ENCODE measurements at regions of chr3 and their contacts with region 1.

Region 1: DNA sequence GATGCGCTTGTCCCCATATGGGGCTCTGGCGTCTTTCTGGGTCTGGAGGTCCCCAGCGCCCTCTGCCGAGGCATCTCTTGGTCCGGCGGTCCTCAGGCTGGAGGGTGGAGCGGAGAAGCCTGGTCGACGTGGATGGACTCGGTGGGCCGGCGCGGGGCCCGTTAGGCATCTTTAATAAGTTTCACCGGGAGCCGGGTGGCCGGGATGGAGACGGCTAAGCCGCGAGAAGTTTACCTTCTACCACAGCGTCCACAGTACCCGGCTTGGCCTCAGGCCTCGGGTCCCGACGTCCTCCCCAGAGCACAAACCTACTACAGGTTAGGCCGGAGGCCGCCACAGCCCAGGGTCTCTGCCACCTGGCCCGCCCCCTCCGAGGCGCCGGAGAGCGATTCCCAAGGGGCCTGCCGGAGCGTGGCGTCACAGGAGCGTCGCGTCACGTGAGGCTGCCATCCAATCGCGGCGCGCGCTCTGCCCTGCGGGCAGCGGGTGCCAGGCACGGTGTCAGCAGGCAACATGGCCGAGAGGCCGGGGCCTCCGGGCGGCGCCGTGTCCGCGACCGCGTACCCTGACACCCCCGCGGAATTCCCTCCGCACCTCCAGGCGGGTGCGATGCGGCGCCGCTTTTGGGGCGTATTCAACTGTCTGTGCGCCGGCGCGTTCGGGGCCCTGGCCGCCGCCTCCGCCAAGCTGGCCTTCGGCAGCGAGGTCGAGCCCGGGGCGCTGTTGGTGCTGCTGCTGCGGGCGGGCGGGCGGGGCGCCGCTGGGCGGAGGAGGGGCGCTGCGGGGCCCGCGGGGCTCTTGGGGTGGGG is at the start of gene TMEM42:
- DNase-seq: peak; percentile 95
- ATAC-seq: peak; percentile 93
- H3K4me3 ChIP-seq: peak within 1 kb of the TSS; percentile 60 to 93 (median 70)
- H3K4me3 Mint-ChIP-seq: peak within 1 kb of the TSS; percentile 91
- H3K27ac ChIP-seq: peak within 1 kb of the TSS; percentile 85 to 88
- H3K27ac Mint-ChIP-seq: peak within 1 kb of the TSS; percentile 91
- H3K4me1 ChIP-seq: peaks cover 7 to 13% of the 10 kb centered on the region in 2 donors
- H3K4me1 Mint-ChIP-seq: peaks cover 23% of the 10 kb centered on the region
- H3K27me3 ChIP-seq: no peaks in the 10 kb centered on the region
- H3K27me3 Mint-ChIP-seq: no peaks in the 10 kb centered on the region
- CTCF ChIP-seq: no peak
- total RNA-seq, gene TMEM42: 22.6 and 22.7 TPM in 2 replicates

Region 2: GRCh38 chr3:43690400-43691119 is 1171.1 kb before region 1 on chr3 and contains the start of gene ABHD5:
- CTCF ChIA-PET with region 1: no interaction called
- POLR2A ChIA-PET with region 1: no interaction called
- intact Hi-C with region 1: loop called (anchors 2 kb)
- DNase-seq: peak; percentile 98
- ATAC-seq: peak; percentile 82
- H3K4me3 ChIP-seq: peak within 1 kb of the TSS; percentile 58 to 86 (median 83)
- H3K4me3 Mint-ChIP-seq: peak within 1 kb of the TSS; percentile 98
- H3K27ac ChIP-seq: peak within 1 kb of the TSS; percentile 58 to 87
- H3K27ac Mint-ChIP-seq: peak within 1 kb of the TSS; percentile 98
- H3K4me1 ChIP-seq: peaks cover 5 to 21% of the 10 kb centered on the region in 2 donors
- H3K4me1 Mint-ChIP-seq: peaks cover 27% of the 10 kb centered on the region
- H3K27me3 ChIP-seq: no peaks in the 10 kb centered on the region
- H3K27me3 Mint-ChIP-seq: no peaks in the 10 kb centered on the region
- CTCF ChIP-seq: peak; percentile 39
- total RNA-seq, gene ABHD5: 11.0 and 12.1 TPM in 2 replicates

Region 3: GRCh38 chr3:44338010-44338827 is 523.4 kb before region 1 on chr3 and contains the start of gene TCAIM:
- CTCF ChIA-PET with region 1: no interaction called
- POLR2A ChIA-PET with region 1: no interaction called
- intact Hi-C with region 1: loop called (anchors 5 kb)
- DNase-seq: peak; percentile 100
- ATAC-seq: peak; percentile 90
- H3K4me3 ChIP-seq: peak within 1 kb of the TSS; percentile 85 to 97 (median 87)
- H3K4me3 Mint-ChIP-seq: peak within 1 kb of the TSS; percentile 99
- H3K27ac ChIP-seq: peak within 1 kb of the TSS; percentile 80 to 88
- H3K27ac Mint-ChIP-seq: peak within 1 kb of the TSS; percentile 99
- H3K4me1 ChIP-seq: peaks cover 16 to 19% of the 10 kb centered on the region in 2 donors
- H3K4me1 Mint-ChIP-seq: peaks cover 29% of the 10 kb centered on the region
- H3K27me3 ChIP-seq: no peaks in the 10 kb centered on the region
- H3K27me3 Mint-ChIP-seq: peaks cover 9% of the 10 kb centered on the region
- CTCF ChIP-seq: no peak
- total RNA-seq, gene TCAIM: 15.8 and 16.7 TPM in 2 replicates

Region 4: DNA sequence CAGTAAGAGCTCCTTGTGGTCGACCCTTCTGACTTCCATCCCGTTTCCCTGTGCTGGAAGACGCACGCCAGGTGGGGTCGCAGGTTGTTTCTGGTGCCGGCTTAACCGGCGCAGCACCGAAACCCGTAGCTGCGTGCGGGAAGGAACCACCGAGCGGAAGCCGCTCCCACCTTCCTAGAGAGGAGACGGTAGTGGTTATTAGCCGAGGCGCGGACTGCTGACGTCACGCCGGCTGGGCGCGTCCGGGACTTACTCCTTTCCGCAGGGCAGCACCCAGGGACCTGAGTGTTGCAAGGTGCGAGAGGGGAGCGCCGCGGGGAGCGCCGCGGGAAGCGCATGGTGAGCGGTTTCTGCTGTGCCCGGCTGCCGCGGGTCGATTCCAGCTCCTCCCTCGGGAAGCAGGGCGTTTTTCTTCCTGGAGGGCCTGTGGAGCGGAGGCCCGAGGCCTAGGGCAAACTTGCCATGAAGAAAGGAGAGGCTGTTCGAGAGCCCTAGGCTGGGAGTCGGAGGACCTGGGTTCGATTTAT is 132.2 kb before region 1 on chr3 and contains the start of gene ZNF501:
- CTCF ChIA-PET with region 1: no interaction called
- POLR2A ChIA-PET with region 1: no interaction called
- intact Hi-C with region 1: loop called (anchors 1 kb)
- DNase-seq: peak; percentile 90
- ATAC-seq: peak; percentile 94
- H3K4me3 ChIP-seq: peak within 1 kb of the TSS; percentile 35 to 89 (median 77)
- H3K4me3 Mint-ChIP-seq: peak within 1 kb of the TSS; percentile 96
- H3K27ac ChIP-seq: peak within 1 kb of the TSS; percentile 15 to 32
- H3K27ac Mint-ChIP-seq: peak within 1 kb of the TSS; percentile 86
- H3K4me1 ChIP-seq: peaks cover 6 to 12% of the 10 kb centered on the region in 2 donors
- H3K4me1 Mint-ChIP-seq: peaks cover 13% of the 10 kb centered on the region
- H3K27me3 ChIP-seq: no peaks in the 10 kb centered on the region
- H3K27me3 Mint-ChIP-seq: no peaks in the 10 kb centered on the region
- CTCF ChIP-seq: no peak
- total RNA-seq, gene ZNF501: 6.1 and 7.2 TPM in 2 replicates

Region 5: GRCh38 chr3:44976002-44976815 is 114.6 kb after region 1 on chr3 and contains the starts of genes EXOSC7 and ZDHHC3:
- CTCF ChIA-PET with region 1: no interaction called
- POLR2A ChIA-PET with region 1: no interaction called
- intact Hi-C with region 1: loop called (anchors 1 kb)
- DNase-seq: peak; percentile 93
- ATAC-seq: peak; percentile 94
- H3K4me3 ChIP-seq: peak within 1 kb of the TSS; percentile 85 to 98 (median 93)
- H3K4me3 Mint-ChIP-seq: peak within 1 kb of the TSS; percentile 93
- H3K27ac ChIP-seq: peak within 1 kb of the TSS; percentile 79 to 80
- H3K27ac Mint-ChIP-seq: peak within 1 kb of the TSS; percentile 93
- H3K4me1 ChIP-seq: peaks cover 25 to 27% of the 10 kb centered on the region in 2 donors
- H3K4me1 Mint-ChIP-seq: peaks cover 50% of the 10 kb centered on the region
- H3K27me3 ChIP-seq: no peaks in the 10 kb centered on the region
- H3K27me3 Mint-ChIP-seq: no peaks in the 10 kb centered on the region
- CTCF ChIP-seq: no peak
- total RNA-seq, gene EXOSC7: 32.9 and 40.0 TPM in 2 replicates
- total RNA-seq, gene ZDHHC3: 46.4 and 52.6 TPM in 2 replicates

Measured in B cell (primary cell).